Mammary epithelial cell (primary cell): ENCODE measurements at regions of chr3 and their contacts with region 1.

Region 1: GRCh38 chr3:156151824-156152428 is 31.5 kb downstream of the KCNAB1 start:
- DNase-seq: peak; percentile 50
- H3K4me3 ChIP-seq: no peak overlapping the region
- H3K27ac ChIP-seq: no peak overlapping the region
- H3K4me1 ChIP-seq: no peaks in the 10 kb centered on the region
- H3K27me3 ChIP-seq: no peaks in the 10 kb centered on the region
- CTCF ChIP-seq: peak; percentile 79 to 87

Region 2: DNA sequence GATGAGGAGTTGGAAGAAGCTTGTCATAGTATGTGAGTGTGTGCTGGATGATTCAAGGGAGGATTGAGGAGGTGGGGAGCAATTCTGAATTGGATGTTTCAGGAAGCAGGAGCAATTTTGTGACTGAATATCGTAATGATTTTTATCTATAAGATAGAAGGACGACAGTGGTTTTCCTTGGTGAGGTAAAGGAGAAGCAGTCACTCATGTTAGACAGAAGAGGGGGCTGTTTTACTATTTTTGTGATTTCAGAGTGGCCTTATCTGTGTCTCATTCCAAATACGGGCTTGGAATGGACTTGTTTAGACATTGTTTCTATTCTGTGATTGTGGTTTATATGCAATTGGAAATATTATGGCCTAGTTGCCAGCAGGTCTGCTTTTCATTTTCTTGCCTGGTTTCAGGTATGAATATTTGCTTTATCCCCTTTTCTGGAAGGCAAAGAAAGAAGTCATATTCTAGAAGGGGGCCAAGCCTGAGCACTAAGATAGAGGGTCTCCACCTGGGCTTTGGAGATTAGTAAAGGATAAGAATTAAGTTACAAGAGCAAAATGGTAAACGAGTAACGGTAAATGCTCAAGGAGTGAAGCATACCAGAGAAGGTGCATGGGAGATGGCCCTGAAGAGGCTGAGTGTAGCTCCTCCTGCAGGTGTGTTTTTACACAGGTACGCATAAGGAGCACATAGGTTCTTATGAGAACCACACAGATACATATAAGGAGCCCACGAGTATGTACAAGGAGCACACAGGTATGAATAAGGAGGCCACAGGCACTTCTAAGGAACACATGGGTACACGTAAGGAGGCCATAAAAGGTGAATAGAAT is 156.2 kb before region 1 on chr3:
- CTCF ChIA-PET with region 1: interaction called, 7 read pairs
- dilution Hi-C with region 1: no loop called
- in situ Hi-C with region 1: no loop called
- intact Hi-C with region 1: loop called (anchors 5 kb)
- DNase-seq: peak; percentile 43
- H3K4me3 ChIP-seq: no peak overlapping the region
- H3K27ac ChIP-seq: no peak overlapping the region
- H3K4me1 ChIP-seq: peaks cover 15% of the 10 kb centered on the region
- H3K27me3 ChIP-seq: no peaks in the 10 kb centered on the region
- CTCF ChIP-seq: peak; percentile 53 to 62

Region 3: DNA sequence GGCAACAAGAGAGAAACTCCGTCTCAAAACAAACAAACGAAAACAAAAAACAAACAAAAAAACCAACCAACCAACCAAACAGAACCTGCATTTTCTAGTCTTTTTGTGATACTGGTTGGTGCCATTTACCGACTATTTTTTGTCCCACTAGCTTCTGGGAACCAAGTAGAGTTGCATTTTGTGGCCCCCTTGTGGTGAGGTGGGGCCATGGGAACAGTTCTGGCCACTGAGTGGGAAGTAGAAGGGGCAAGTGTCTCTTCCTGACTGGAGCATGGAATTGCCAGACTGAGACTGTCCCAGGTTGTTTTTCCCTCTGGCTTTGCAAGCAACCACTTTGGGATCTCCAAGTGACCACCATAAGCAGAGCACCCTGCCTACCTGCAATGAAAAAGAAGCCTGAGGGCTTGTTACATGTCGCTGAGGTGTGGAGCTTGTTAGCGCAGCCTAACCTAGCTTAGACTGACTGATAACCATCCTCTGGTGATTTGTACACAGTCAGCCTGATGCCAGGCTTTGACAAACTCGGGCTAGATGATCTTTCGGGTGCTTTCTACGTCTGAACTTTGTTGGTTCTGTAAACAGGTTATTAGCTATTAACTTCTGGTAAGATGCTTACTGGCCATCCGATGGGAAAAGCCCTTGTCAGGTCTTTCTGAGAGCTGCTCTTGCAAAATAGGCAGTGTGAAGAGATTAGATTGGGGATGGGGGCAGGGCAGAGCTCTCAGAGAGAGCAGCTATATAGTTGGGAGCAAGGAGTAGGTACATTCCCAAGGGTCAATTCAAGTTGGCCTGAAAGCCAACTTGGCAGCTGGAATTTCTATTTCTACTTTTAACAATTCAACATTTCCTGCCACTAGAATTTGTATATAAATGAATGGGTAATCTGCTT is 230.8 kb after region 1 on chr3:
- CTCF ChIA-PET with region 1: no interaction called
- dilution Hi-C with region 1: no loop called
- in situ Hi-C with region 1: no loop called
- intact Hi-C with region 1: loop called (anchors 1 kb)
- DNase-seq: peak; percentile 20
- H3K4me3 ChIP-seq: no peak overlapping the region
- H3K27ac ChIP-seq: no peak overlapping the region
- H3K4me1 ChIP-seq: no peaks in the 10 kb centered on the region
- H3K27me3 ChIP-seq: no peaks in the 10 kb centered on the region
- CTCF ChIP-seq: peak; percentile 74 to 79

Region 4: DNA sequence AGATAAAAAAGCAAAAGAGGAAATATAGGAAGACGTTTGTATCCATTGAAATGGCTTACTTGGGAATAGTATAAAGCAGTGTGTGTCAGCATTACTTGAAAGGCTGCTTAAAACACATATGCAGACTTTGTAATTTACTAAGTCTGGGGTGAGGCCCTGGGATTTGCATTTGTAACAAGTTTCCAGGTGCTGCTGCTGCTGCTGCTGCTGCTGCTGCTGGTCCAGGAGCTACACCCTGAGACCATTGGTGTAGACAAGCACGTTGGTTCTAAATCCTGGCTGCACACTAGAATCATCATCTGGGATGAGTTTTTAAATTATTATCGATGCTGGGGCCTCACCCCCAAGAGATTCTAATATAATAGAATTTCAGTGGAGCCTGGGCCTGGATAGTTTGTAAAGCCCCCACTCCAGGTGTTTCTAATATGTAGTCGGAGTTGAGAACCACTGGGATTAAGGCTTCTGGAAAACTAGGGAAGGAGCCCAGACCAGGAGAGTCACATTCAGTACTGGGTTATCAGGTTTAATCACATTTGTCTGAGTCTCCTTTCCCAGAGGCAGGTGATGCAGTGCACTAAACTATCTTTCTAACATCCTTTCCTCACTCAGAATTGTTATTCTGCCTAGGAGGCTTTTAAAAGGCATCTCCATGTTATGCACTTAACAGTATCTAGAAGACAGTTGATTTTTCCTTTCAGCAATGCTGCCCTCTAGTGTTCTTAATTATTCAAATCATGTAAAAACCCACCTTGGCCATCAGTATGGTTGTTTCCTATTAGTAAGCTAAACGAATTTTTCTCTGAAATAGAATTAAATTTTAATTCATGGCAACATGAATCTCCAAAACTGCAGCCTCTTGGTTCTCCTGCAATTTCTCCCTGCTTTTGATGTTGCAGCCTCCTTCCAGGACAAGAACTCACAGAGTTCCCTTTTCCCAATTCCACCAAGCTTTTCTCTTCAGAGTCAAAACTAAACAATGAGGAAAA is 357.6 kb after region 1 on chr3:
- CTCF ChIA-PET with region 1: no interaction called
- dilution Hi-C with region 1: no loop called
- in situ Hi-C with region 1: loop called (anchors 5 to 10 kb)
- intact Hi-C with region 1: loop called (anchors 1 kb)
- DNase-seq: peak; percentile 44
- H3K4me3 ChIP-seq: no peak overlapping the region
- H3K27ac ChIP-seq: no peak overlapping the region
- H3K4me1 ChIP-seq: no peaks in the 10 kb centered on the region
- H3K27me3 ChIP-seq: peaks cover 2% of the 10 kb centered on the region
- CTCF ChIP-seq: peak; percentile 36 to 57

Region 5: GRCh38 chr3:156751461-156752025 is 599.6 kb after region 1 on chr3:
- CTCF ChIA-PET with region 1: no interaction called
- dilution Hi-C with region 1: no loop called
- in situ Hi-C with region 1: no loop called
- intact Hi-C with region 1: no loop called
- DNase-seq: peak; percentile 87
- H3K4me3 ChIP-seq: peak overlapping the region in 1 of 3 experiments; percentile 2
- H3K27ac ChIP-seq: peak overlapping the region; percentile 94
- H3K4me1 ChIP-seq: peaks cover 27% of the 10 kb centered on the region
- H3K27me3 ChIP-seq: no peaks in the 10 kb centered on the region
- CTCF ChIP-seq: peak in 1 of 2 donors; percentile 29

Region 6: GRCh38 chr3:157136647-157137387 is 984.9 kb after region 1 on chr3:
- CTCF ChIA-PET with region 1: interaction called, 5 read pairs
- dilution Hi-C with region 1: no loop called
- in situ Hi-C with region 1: loop called in 1 of 2 experiments (anchors 25 kb)
- intact Hi-C with region 1: loop called (anchors 1 kb)
- DNase-seq: peak; percentile 81
- H3K4me3 ChIP-seq: no peak overlapping the region
- H3K27ac ChIP-seq: peak overlapping the region; percentile 56
- H3K4me1 ChIP-seq: peaks cover 52% of the 10 kb centered on the region
- H3K27me3 ChIP-seq: no peaks in the 10 kb centered on the region
- CTCF ChIP-seq: no peak

Region 7: DNA sequence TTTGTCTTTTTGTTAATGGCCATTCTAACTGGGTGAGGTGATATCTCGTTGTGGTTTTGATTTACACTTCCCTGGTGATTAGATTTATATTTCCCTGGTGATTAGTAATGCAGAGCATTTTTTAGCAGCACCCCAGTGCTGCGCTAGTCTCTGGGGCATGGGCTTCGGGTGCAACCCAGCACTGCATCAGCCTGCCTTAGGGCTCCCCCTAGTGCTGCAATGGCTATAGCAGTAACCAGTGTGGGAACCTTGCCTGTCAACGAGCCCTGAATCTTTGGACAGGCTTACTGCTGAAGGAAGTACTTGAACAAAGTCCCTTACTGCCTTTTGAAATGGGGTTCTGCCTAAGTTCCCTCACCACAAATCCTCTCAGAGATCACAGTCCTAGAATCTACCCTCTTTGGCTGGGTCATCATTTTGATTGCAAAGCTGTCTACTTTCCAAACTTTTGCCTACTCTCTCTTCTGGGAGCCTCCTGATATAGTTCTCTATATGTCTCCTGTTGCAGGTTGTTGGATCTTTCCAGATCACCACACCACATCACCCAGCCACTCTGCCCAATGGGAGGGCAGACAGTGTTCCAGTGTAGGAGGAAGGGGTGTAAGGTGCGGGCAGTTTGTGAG is 1087.3 kb after region 1 on chr3:
- CTCF ChIA-PET with region 1: no interaction called
- dilution Hi-C with region 1: no loop called
- in situ Hi-C with region 1: no loop called
- intact Hi-C with region 1: loop called (anchors 1 kb)
- DNase-seq: peak; percentile 35
- H3K4me3 ChIP-seq: no peak overlapping the region
- H3K27ac ChIP-seq: no peak overlapping the region
- H3K4me1 ChIP-seq: no peaks in the 10 kb centered on the region
- H3K27me3 ChIP-seq: no peaks in the 10 kb centered on the region
- CTCF ChIP-seq: peak; percentile 90 to 91